OCI-LY7 (cell line): ENCODE measurements at regions of chr7 and their contacts with region 1.

Region 1: GRCh38 chr7:93551063-93551904 is 23.2 kb downstream of the CALCR start:
- DNase-seq: peak; percentile 48
- H3K4me3 ChIP-seq: no peak overlapping the region
- H3K27ac ChIP-seq: no peak overlapping the region
- H3K4me1 ChIP-seq: no peaks in the 10 kb centered on the region
- CTCF ChIP-seq: peak; percentile 80

Region 2: DNA sequence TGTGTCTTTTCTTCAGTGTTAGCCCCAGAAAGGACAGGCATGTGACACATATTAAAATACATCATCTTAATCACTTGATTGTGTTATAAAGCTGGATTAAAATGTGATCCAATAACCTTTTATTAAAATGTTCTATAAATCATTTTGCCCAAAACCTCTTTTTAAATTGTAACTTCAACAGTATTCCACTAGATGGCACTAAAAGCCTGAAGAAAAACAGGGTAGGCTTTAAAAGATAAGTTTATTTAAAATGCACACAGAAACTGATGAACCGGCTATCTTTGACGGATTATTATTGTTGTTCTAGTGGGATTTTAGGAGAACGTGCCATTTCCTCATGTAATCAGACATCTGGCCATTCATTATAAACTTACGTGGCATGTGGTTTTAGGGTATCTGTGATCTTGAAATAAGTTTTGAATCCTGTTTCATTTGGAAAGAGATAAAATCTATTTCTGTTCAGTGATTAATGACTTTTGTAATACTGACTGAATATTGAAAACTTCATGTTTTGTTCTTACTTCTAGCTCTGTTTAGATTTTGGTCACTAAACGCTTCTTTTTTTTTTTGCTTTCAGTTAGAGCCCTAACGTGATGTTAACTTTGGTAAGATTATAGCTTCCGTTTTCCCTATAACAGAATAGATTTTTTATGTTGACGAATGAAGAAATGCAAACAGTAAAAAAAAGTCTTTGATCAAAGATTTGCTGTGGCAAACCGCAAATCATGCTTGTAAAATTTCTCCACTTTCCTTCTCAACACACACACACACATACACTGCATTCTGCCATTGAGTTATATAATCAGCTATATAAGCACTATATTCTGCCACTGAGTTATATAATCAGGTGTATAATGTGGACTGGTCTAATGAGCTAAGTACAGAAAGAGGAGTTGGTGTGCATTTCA is 305.5 kb before region 1 on chr7:
- CTCF ChIA-PET with region 1: no interaction called
- POLR2A ChIA-PET with region 1: no interaction called
- intact Hi-C with region 1: loop called (anchors 2 kb)
- DNase-seq: peak; percentile 39
- H3K4me3 ChIP-seq: no peak overlapping the region
- H3K27ac ChIP-seq: no peak overlapping the region
- H3K4me1 ChIP-seq: no peaks in the 10 kb centered on the region
- CTCF ChIP-seq: peak; percentile 90

Region 3: DNA sequence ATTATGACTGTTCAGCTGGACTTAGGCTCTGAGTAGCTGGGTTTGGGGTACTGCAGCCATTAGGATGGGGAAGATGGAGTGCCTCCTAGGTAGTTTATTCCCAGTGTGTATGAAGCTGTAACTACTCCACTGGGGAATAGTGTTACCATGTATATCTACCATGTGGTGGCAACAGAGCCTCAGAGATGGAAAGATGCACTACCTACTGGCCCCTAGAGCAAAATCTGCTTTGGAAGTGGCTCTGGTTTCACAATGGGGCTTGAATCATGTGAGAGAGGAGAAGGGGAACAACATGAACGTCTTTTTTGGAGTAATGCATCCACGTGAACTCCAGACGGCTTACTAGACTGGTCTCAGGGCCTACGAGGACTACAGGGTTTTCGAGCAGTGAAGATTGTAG is 144.1 kb before region 1 on chr7:
- CTCF ChIA-PET with region 1: no interaction called
- POLR2A ChIA-PET with region 1: no interaction called
- intact Hi-C with region 1: loop called (anchors 10 kb)
- DNase-seq: no peak
- H3K4me3 ChIP-seq: no peak overlapping the region
- H3K27ac ChIP-seq: no peak overlapping the region
- H3K4me1 ChIP-seq: no peaks in the 10 kb centered on the region
- CTCF ChIP-seq: no peak